Right cardiac atrium (tissue), 5 donors: ENCODE measurements at regions of chr11 and their contacts with region 1.

Region 1: DNA sequence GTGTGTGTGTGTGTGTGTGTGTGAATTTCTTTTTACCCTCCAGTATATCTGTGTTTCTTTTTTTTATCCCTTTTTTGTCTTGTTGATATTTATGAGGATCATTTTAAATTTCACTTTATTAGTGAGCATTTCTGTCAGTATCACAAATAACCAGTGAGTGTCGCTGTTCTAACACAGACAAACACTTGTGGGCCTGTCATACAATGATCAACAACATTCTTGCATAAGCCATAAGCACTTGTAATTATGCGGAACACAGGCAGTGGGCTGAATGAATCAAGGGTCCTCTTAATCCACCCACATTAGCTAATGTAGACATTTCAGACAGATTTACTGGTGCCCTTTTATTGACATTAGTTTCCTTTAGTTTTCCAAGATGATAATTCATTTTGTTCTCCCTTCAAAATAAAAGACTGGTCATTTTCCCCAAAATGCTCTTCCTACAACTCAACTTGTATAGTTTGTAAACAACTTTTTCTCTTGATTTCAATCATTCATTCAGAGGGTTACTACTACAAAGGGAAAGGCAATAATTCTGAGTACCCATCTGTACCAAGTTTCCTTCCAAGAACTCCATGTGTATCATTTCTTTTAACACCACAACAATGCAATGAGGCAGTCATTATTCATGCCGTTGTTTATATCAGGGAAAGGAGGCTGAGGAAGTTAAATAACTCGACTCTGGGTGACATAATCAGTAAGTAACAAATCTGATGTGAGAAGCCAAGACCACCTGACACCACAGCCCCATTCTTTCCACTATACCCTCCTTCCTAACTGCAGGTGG is 34.5 kb upstream of the ANO3 start:
- DNase-seq: no peak
- ATAC-seq: peak; percentile 48 to 52
- H3K4me3 ChIP-seq: no peak overlapping the region
- H3K27ac ChIP-seq: no peak overlapping the region
- H3K4me1 ChIP-seq: no peaks in the 10 kb centered on the region
- H3K27me3 ChIP-seq: no peaks in the 10 kb centered on the region

Region 2: DNA sequence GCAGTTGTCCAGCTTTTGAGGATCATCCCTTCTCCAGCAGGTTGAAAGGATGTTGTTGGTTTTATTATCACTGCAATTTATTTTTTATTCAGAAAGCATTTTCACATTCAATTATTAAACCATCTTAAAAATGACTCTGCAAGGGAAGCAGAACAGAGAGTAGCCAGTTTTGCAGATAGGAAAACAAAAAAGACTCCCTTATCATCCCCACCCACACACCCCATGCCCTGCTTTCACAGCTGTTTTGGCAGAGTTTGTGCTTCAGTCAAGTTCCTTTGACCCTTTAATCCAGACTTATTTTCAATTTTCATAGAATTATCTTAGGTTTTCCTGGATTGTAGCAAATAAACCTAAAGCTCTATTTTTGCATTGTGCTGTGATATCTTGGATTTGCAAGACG is 230.3 kb after region 1 on chr11:
- intact Hi-C with region 1: no loop called
- DNase-seq: no peak
- ATAC-seq: no peak
- H3K4me3 ChIP-seq: no peak overlapping the region
- H3K27ac ChIP-seq: no peak overlapping the region
- H3K4me1 ChIP-seq: no peaks in the 10 kb centered on the region
- H3K27me3 ChIP-seq: no peaks in the 10 kb centered on the region

Region 3: GRCh38 chr11:26649884-26650283 is 352.5 kb after region 1 on chr11:
- intact Hi-C with region 1: loop called in 1 of 4 experiments (anchors 10 kb)
- DNase-seq: peak in 1 of 3 donors; percentile 11
- ATAC-seq: peak in 1 of 2 donors; percentile 65
- H3K4me3 ChIP-seq: no peak overlapping the region
- H3K27ac ChIP-seq: no peak overlapping the region
- H3K4me1 ChIP-seq: no peaks in the 10 kb centered on the region
- H3K27me3 ChIP-seq: no peaks in the 10 kb centered on the region

Region 4: DNA sequence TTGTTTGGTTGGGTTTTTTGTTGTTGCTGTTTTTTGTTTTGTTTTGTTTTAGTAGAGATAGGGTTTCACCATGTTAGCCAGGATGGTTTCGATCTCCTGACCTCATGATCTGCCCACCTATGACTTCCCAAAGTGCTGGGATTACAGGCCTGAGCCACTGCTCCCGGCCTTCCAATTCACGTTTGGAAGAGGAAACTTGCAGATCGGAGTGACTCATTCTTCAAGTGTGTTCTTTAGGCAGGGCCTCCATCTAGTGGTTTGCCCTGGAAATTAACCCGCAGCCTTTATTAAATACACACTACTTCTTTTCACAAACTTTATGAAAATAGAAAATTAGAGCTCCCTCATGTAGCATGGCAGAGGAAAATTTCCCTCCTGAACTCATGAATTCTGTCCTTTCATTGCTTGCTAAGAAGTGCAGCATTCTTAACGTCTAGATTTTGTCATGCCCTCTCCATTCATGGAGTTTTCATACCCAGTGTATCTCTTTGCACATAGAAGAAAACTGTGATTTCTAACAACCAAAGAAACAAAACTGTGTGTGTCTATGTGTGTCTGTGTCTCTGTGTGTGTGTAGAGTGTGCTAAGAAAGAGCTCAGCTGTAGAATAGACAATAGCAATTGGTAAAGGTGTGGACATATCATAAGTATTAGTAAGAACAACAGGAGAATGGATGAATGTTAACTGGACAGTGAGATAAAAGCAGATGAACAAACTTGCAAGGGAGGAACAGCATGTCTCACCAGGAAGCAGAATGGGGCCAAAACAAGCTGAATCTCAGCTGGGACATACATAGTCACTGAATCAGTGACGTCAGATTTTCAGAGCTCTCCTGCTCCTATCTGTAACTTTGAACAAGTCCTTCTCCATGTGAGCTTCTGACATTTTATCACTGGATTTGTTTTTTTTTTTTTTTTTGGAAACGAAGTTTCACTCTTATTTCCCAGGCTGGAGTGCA is 861.6 kb after region 1 on chr11:
- intact Hi-C with region 1: loop called in 2 of 4 experiments (anchors 5 to 10 kb)
- DNase-seq: peak in 2 of 3 donors; percentile 30 to 66
- ATAC-seq: peak; percentile 92 to 94
- H3K4me3 ChIP-seq: no peak overlapping the region
- H3K27ac ChIP-seq: no peak overlapping the region
- H3K4me1 ChIP-seq: no peaks in the 10 kb centered on the region
- H3K27me3 ChIP-seq: no peaks in the 10 kb centered on the region